ENCODE measurements at regions of chr14 and their contacts with region 1.

Region 1: DNA sequence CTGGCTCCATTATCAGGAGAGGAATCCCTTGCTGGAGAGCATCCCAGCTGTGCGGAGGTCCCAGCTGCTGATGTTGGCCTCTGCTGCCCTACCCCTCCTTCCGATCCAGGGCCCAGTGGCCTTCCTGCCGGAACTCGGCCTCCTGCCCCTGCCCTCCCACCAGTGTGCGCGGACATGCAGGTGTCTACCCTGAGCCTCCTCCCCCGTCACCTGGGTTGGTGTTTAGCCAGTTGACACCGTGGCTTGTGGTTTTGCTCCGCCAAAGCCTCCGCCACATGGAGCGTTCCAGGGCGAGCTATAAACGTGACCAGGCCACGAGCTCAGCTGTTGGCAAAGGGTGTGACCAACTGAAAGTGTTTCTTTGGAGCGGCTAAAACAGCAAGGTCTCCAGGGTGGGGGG is 1104.3 kb downstream of the BCL11B start:
- DNase-seq: peak; percentile 50
- ATAC-seq: no peak
- H3K4me3 Mint-ChIP-seq: peak overlapping the region; percentile 31
- H3K27ac Mint-ChIP-seq: peak overlapping the region; percentile 99
- H3K4me1 Mint-ChIP-seq: peaks cover 92% of the 10 kb centered on the region
- H3K27me3 Mint-ChIP-seq: no peaks in the 10 kb centered on the region

Region 2: DNA sequence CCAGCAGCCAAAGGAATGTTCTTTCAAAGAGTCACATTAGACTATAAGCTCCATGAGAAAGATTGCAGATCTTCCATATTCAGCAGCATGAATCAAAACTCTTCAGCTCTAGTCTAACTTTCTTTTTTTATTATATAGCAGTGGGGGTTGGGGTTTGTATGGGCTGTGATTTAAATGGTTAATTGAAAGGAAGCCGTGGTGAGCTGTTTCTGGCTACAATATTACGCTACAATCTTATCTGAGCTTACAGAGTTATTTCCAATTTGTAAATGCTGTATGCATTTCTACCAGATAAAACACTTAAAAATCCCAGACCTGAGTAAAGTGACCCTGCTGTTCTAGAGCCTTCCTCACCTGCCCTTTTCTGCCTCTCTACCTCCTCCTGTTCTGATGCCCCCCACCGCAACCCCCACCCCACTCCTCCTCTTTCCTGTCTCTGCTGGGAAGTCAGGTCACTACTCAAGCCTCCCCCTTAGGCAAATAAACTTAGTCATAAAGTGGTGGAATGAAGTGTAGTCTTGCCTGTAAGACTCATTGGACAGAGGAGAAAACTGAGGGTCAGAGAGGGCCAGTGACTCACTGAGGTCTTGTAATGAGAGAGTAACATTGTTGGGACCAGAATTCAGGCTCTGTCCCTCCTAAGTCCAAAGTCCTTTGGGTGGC is 14.8 kb after region 1 on chr14:
- CTCF ChIA-PET with region 1: interaction called, 21 read pairs
- POLR2A ChIA-PET with region 1: interaction called, 14 read pairs
- intact Hi-C with region 1: loop called (anchors 1 kb)
- DNase-seq: peak; percentile 86
- ATAC-seq: peak; percentile 74
- H3K4me3 Mint-ChIP-seq: peak overlapping the region; percentile 35
- H3K27ac Mint-ChIP-seq: peak overlapping the region; percentile 100
- H3K4me1 Mint-ChIP-seq: peaks cover 96% of the 10 kb centered on the region
- H3K27me3 Mint-ChIP-seq: no peaks in the 10 kb centered on the region

Region 3: DNA sequence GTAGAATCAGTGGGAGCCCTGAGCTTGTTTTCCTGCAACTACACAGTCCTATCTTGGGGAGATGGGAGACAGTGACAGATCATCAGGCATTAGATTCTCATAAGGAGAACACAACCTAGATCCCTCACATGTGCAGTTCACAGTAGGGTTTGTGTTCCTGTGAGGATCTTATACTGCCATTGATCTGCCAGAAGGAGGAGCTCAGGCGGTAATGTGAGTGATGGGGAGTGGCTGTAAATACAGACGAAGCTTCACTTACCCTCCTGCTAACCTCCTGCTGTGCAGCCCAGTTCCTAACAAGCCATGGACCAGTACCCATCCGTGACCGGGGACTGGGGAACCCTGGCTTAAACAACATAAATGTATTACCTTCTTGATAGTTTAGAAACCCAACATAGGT is 70.2 kb after region 1 on chr14:
- CTCF ChIA-PET with region 1: no interaction called
- POLR2A ChIA-PET with region 1: no interaction called
- intact Hi-C with region 1: no loop called
- DNase-seq: no peak
- ATAC-seq: no peak
- H3K4me3 Mint-ChIP-seq: no peak overlapping the region
- H3K27ac Mint-ChIP-seq: peak overlapping the region; percentile 21
- H3K4me1 Mint-ChIP-seq: peaks cover 51% of the 10 kb centered on the region
- H3K27me3 Mint-ChIP-seq: no peaks in the 10 kb centered on the region

Measured in activated CD4-positive, alpha-beta T cell treated with anti-CD3 and anti-CD28 coated beads for 36 hours (primary cell).